Naive thymus-derived CD4-positive, alpha-beta T cell (primary cell): ENCODE measurements at regions of chr12 and their contacts with region 1.

Region 1: GRCh38 chr12:45518291-45519235 is 210.9 kb upstream of the ARID2 start:
- DNase-seq: peak in 8 of 9 donors; percentile 31 to 65 (median 49)
- ATAC-seq: peak; percentile 98
- H3K4me3 ChIP-seq: peak overlapping the region; percentile 3
- H3K4me3 Mint-ChIP-seq: peak overlapping the region; percentile 27 to 72 (median 54)
- H3K27ac ChIP-seq: peak overlapping the region; percentile 27
- H3K27ac Mint-ChIP-seq: peak overlapping the region; percentile 29 to 90 (median 79)
- H3K4me1 ChIP-seq: peaks cover 0 to 11% of the 10 kb centered on the region in 2 donors
- H3K4me1 Mint-ChIP-seq: peaks cover 11 to 21% (median 16%) of the 10 kb centered on the region in 7 donors
- H3K27me3 ChIP-seq: no peaks in the 10 kb centered on the region
- H3K27me3 Mint-ChIP-seq: no peaks in the 10 kb centered on the region

Region 2: DNA sequence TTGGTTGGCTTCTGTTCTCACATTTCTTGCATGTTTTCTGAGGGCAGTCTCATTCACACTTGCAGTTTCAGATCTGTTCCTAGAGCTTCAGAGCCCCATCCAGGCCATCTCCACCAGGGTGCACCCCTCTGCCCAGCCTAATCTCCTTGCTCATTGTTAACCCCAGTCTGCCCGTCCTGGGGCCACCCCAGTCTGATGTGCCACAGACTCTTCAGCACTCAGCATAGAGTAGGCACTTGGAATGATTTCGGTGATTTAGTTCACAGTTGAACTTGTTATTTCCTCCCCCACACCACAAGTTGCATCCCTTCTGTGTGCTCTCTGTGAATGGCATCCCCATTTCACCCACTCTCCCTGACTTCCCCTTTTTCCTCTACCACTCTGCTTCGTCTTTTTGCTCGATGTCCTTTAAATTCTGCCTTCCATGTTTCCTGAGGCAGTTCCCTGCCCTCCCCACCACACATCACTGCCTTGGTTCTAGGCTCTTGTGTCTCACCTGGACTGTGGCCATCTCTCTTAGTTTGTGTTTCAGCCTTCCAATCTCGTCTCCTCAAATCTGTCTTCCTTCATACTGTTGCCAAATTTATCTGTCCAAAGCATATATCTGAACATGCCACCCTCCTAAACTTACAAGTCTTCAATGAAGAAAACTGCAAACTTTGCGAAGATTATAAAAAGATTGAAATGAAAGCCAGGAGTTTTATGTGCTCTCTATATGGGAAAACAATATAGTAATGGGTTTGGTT is 261.2 kb before region 1 on chr12:
- CTCF ChIA-PET with region 1: no interaction called
- POLR2A ChIA-PET with region 1: no interaction called
- intact Hi-C with region 1: no loop called
- DNase-seq: no peak
- ATAC-seq: peak; percentile 64
- H3K4me3 ChIP-seq: no peak overlapping the region
- H3K4me3 Mint-ChIP-seq: no peak overlapping the region
- H3K27ac ChIP-seq: no peak overlapping the region
- H3K27ac Mint-ChIP-seq: peak overlapping the region in 1 of 9 donors; percentile 48
- H3K4me1 ChIP-seq: no peaks in the 10 kb centered on the region
- H3K4me1 Mint-ChIP-seq: peaks cover 20 to 52% (median 39%) of the 10 kb centered on the region in 7 donors
- H3K27me3 ChIP-seq: no peaks in the 10 kb centered on the region
- H3K27me3 Mint-ChIP-seq: no peaks in the 10 kb centered on the region

Region 3: GRCh38 chr12:45490213-45490873 is 28.2 kb before region 1 on chr12:
- CTCF ChIA-PET with region 1: no interaction called
- POLR2A ChIA-PET with region 1: no interaction called
- intact Hi-C with region 1: no loop called
- DNase-seq: no peak
- ATAC-seq: no peak
- H3K4me3 ChIP-seq: no peak overlapping the region
- H3K4me3 Mint-ChIP-seq: no peak overlapping the region
- H3K27ac ChIP-seq: no peak overlapping the region
- H3K27ac Mint-ChIP-seq: no peak overlapping the region
- H3K4me1 ChIP-seq: no peaks in the 10 kb centered on the region
- H3K4me1 Mint-ChIP-seq: no peaks in the 10 kb centered on the region
- H3K27me3 ChIP-seq: no peaks in the 10 kb centered on the region
- H3K27me3 Mint-ChIP-seq: peaks cover 0 to 7% (median 0%) of the 10 kb centered on the region in 5 donors

Region 4: DNA sequence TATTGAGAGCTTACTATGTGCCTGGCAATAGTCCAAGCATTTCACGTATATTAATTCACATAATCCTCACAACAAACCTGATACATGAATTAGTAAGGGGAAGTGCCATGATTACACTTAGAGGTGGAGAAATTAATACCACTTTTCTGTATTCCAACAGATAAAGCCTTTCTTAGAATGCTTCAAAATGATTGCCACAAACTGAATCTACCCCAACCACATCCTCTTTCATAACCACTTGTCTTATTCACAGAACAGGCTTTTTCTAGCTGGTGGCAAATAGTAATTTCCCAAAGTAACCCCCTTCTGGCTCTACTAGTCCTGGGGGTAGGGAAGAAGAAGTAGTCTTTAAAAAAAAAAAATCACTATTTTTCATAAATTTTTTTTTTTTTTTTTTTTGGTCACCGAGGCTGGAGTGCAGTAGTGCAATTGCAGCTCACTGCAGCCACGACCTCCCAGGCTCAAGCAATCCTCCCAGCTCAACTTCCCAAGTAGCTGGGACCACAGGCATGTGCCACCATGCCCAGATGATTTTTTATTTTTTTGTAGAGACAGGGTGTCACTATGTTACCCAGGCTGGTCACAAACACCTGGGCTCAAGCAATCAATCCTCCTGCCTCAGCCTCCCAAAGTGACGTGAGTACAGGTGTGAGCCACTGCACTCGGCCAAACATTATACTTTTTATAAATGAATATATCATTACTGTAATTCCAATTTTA is 151.9 kb after region 1 on chr12:
- CTCF ChIA-PET with region 1: no interaction called
- POLR2A ChIA-PET with region 1: no interaction called
- intact Hi-C with region 1: loop called in 1 of 2 experiments (anchors 5 kb)
- DNase-seq: peak in 7 of 9 donors; percentile 36 to 65 (median 47)
- ATAC-seq: peak; percentile 79
- H3K4me3 ChIP-seq: no peak overlapping the region
- H3K4me3 Mint-ChIP-seq: peak overlapping the region; percentile 3 to 76 (median 53)
- H3K27ac ChIP-seq: no peak overlapping the region
- H3K27ac Mint-ChIP-seq: peak overlapping the region in 2 of 9 donors; percentile 0 to 19
- H3K4me1 ChIP-seq: peaks cover 25 to 30% of the 10 kb centered on the region in 2 donors
- H3K4me1 Mint-ChIP-seq: peaks cover 13 to 39% (median 28%) of the 10 kb centered on the region in 7 donors
- H3K27me3 ChIP-seq: no peaks in the 10 kb centered on the region
- H3K27me3 Mint-ChIP-seq: peaks cover 0 to 7% (median 0%) of the 10 kb centered on the region in 5 donors